ENCODE measurements at regions of chr1 and their contacts with region 1.

Region 1: DNA sequence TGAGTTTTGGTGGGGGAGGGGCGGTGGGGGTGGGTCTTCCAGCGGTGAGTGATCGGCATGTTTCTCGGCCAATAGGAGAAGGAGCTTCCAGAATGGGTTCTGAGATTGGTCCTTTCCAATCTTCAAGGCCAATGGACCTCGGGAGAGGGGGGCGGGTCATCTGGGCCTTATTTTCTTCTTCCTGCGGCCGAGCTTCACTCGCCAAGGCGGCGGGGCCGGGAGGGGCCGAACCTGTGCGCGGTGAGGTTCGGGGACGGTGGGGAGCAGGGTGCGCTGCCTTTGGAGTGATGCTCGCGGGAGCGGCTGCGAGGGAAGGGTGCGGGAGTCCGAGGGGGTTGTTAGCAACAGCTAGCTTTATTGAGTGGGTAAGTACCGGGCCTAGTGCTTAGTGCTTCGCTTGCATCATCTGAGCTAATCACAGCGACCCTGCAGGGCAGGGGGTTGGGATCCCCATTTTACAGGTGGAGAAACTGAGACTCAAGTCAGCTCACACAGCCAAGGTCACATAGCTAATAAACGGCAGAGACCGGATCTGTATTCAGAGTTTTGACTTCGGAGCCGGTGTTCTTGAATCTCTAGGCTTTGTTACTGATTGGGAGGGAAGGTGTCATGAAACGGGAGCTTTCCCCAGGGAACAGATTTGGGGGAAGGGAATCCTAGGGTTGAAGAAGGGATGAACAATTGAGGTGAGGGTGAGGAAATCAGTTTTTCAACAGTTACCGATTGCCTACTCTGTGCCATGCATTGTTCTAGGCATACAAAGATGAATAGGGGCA is 549 bp downstream of the KDM4A start:
- DNase-seq: peak; percentile 92 to 96
- H3K4me3 ChIP-seq: peak overlapping the region; percentile 73 to 95 (median 90)
- H3K27ac ChIP-seq: peak overlapping the region; percentile 91
- H3K4me1 ChIP-seq: peaks cover 6 to 11% (median 7%) of the 10 kb centered on the region in 4 experiments; a peak in 5 of 7 replicates
- H3K27me3 ChIP-seq: no peaks in the 10 kb centered on the region
- CTCF ChIP-seq: no peak
- EP300 ChIP-seq: 0 out of 3 replicates have a peak, but pooled peaks of 1 of the 2 experiments have one; percentile 2
- POLR2A ChIP-seq: peak; percentile 99 to 100
- RAD21 ChIP-seq: no peak

Region 2: DNA sequence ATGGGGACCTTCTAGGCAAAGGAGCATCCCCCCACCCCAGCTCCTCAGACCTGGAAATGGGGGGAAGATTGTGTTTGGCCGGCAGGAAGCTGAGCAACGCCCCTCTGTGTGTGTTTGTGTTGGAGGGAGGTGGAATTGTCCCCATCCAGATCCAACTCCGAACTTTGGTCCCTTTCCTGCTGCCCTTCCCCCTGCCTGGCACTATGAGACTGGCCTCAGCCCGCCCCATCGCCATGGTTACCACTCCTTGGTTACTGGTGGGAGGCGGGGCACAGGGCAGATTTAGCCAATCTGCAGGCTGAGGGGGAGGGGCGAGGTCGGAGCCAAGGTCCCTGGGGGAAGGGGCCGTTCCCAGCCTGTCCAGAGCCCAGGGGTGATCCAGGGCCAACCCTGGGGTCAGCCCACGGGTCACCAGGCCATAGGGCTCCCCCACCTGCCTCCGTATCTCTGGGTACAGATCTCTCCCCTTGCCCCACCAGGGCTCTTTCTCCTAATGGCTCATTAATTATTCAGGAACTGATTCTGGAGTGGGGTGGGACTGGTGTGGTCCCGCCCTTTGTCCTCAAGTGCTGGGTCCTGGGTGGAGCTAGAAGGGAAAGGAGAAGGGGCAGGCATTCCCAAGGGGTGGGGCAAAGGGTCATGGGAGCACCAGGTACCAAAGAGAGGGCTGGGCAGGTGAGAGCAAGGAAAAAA is 104.7 kb before region 1 on chr1:
- CTCF ChIA-PET with region 1: interaction called, 3 read pairs
- POLR2A ChIA-PET with region 1: interaction called, 10 read pairs
- DNase-seq: peak in 1 of 2 experiments; percentile 97
- H3K4me3 ChIP-seq: peak overlapping the region in 3 of 4 experiments; percentile 16 to 53 (median 30); a peak in 5 of 8 replicates
- H3K27ac ChIP-seq: peak overlapping the region; percentile 80
- H3K4me1 ChIP-seq: peaks cover 8 to 54% (median 43%) of the 10 kb centered on the region in 4 experiments
- H3K27me3 ChIP-seq: no peaks in the 10 kb centered on the region
- CTCF ChIP-seq: no peak
- EP300 ChIP-seq: peak; percentile 67 to 76; a peak in 2 of 3 replicates
- POLR2A ChIP-seq: no peak
- RAD21 ChIP-seq: no peak

Region 3: DNA sequence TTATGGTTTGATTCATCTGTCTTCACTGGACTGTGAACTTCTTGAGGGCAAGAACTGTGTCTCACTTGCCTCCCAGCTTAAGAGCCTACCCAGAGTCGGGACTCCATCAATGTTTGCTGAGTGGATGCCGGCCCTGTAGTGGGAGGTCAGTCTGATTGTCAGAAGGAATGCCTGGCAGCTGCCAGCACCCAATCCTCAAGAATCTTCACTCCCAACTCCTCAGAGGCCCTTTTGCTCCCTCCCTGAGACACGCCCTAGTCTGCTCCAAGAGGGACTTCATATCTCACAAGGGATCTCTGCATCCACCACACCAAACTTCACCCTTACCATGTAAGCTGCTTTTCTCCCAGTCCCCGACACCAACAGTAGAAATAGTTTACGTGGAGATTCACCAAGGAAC is 15.8 kb before region 1 on chr1:
- CTCF ChIA-PET with region 1: interaction called, 14 read pairs
- POLR2A ChIA-PET with region 1: interaction called, 35 read pairs
- DNase-seq: no peak
- H3K4me3 ChIP-seq: no peak overlapping the region
- H3K27ac ChIP-seq: no peak overlapping the region
- H3K4me1 ChIP-seq: 0 out of 7 replicates have a peak, but pooled peaks cover 0 to 4% (median 0%) of the 10 kb centered on the region in 4 experiments
- H3K27me3 ChIP-seq: no peaks in the 10 kb centered on the region; a peak in 1 of 7 replicates
- CTCF ChIP-seq: no peak
- EP300 ChIP-seq: no peak
- POLR2A ChIP-seq: no peak
- RAD21 ChIP-seq: no peak

Region 4: GRCh38 chr1:43688594-43689000 is 38.1 kb after region 1 on chr1:
- CTCF ChIA-PET with region 1: interaction called, 7 read pairs
- POLR2A ChIA-PET with region 1: interaction called, 651 read pairs
- DNase-seq: no peak
- H3K4me3 ChIP-seq: no peak overlapping the region
- H3K27ac ChIP-seq: no peak overlapping the region
- H3K4me1 ChIP-seq: no peaks in the 10 kb centered on the region
- H3K27me3 ChIP-seq: no peaks in the 10 kb centered on the region
- CTCF ChIP-seq: no peak
- EP300 ChIP-seq: no peak
- POLR2A ChIP-seq: no peak
- RAD21 ChIP-seq: no peak

Region 5: GRCh38 chr1:43783671-43784205 is 133.2 kb after region 1 on chr1:
- CTCF ChIA-PET with region 1: no interaction called
- POLR2A ChIA-PET with region 1: no interaction called
- DNase-seq: no peak
- H3K4me3 ChIP-seq: no peak overlapping the region
- H3K27ac ChIP-seq: no peak overlapping the region
- H3K4me1 ChIP-seq: peaks cover 0 to 4% (median 0%) of the 10 kb centered on the region in 4 experiments; a peak in 1 of 7 replicates
- H3K27me3 ChIP-seq: no peaks in the 10 kb centered on the region
- CTCF ChIP-seq: no peak
- EP300 ChIP-seq: no peak
- POLR2A ChIP-seq: no peak
- RAD21 ChIP-seq: no peak

Region 6: GRCh38 chr1:43802356-43802980 is 152.0 kb after region 1 on chr1:
- CTCF ChIA-PET with region 1: no interaction called
- POLR2A ChIA-PET with region 1: no interaction called
- DNase-seq: no peak
- H3K4me3 ChIP-seq: no peak overlapping the region
- H3K27ac ChIP-seq: no peak overlapping the region
- H3K4me1 ChIP-seq: peaks cover 0 to 4% (median 0%) of the 10 kb centered on the region in 4 experiments; a peak in 2 of 7 replicates
- H3K27me3 ChIP-seq: no peaks in the 10 kb centered on the region
- CTCF ChIP-seq: no peak
- EP300 ChIP-seq: no peak
- POLR2A ChIP-seq: no peak
- RAD21 ChIP-seq: no peak